Right cardiac atrium (tissue), 5 donors: ENCODE measurements at regions of chr4 and their contacts with region 1.

Region 1: DNA sequence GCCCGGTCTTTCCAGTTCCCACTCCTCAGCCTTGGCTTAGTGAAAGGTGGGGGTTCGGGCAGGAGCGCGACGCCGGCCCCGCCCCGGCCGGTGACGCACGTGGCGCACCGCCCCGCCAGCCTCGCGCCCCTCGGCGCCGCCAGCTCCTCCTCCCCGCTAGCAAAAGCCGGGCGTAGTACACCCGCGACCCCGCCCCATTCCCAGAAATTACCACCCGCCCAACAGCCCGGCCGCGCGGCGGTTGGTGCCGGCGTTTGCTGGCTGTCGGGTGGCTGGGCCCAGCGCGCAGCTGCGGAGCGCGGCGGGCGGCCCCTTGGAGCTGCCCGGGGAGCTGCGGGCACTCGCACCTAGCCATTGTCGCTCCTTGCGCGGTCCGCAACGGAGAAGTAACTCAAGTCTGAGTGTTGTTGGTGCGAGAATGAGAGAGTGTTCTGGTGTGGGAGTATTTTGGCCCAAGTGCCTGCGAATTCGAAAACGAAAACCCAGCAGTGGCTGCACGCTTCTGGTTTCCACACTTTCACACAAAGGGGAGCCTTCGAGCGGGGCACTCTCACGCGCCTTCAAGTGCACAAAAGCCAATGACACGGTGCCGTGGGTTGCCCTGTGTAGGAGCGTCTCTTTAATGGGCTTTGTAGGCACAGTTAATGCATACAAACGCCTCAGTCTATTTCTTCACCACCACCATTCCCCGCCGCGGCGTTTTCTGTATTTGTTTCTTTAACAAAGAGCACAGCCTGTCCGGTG is 1.0 kb upstream of the ELF2 start:
- DNase-seq: peak; percentile 97 to 98 (median 98)
- ATAC-seq: peak; percentile 89 to 93
- H3K4me3 ChIP-seq: peak overlapping the region; percentile 96
- H3K27ac ChIP-seq: peak overlapping the region; percentile 99
- H3K4me1 ChIP-seq: no peaks in the 10 kb centered on the region
- H3K27me3 ChIP-seq: no peaks in the 10 kb centered on the region

Region 2: GRCh38 chr4:138235419-138235952 is 942.6 kb before region 1 on chr4:
- intact Hi-C with region 1: no loop called
- DNase-seq: no peak
- ATAC-seq: no peak
- H3K4me3 ChIP-seq: no peak overlapping the region
- H3K27ac ChIP-seq: no peak overlapping the region
- H3K4me1 ChIP-seq: no peaks in the 10 kb centered on the region
- H3K27me3 ChIP-seq: no peaks in the 10 kb centered on the region

Region 3: GRCh38 chr4:138892483-138893407 is 285.3 kb before region 1 on chr4:
- intact Hi-C with region 1: no loop called
- DNase-seq: no peak
- ATAC-seq: no peak
- H3K4me3 ChIP-seq: no peak overlapping the region
- H3K27ac ChIP-seq: no peak overlapping the region
- H3K4me1 ChIP-seq: no peaks in the 10 kb centered on the region
- H3K27me3 ChIP-seq: no peaks in the 10 kb centered on the region

Region 4: DNA sequence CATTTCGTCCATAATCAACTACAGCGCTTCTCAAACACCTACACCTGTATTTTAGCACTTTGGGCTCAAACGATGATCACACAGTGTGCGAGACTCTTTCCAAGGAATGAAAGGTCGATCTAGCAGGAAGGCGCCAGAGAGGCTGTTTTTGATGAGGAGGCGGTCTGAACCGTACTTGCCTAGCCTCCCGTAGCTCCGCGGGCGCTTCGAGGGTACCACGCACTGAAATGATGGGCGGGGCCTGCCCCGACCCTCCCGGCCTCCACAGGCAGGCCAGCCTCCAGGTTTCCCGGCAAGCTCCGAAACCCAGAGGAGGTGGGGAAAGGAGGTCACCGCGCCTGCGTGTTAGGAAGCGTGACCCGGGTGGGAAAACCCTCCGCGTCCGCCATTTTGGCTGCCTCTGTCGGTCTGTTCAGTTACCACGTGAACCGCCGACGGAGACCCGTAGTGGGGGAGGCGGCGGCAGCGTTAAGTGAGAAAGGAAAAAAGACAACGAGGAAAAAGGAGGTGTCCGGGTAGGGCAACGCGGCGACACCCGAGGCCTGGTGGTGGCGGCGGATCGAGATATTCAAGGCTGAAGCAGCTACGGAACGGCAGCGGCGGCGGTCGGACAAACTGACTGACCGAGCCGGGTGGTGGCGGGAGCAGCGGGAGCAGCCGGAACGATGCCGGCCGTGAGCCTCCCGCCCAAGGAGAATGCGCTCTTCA is 123.2 kb after region 1 on chr4 and contains the start of gene NAA15:
- intact Hi-C with region 1: loop called in 1 of 4 experiments (anchors 10 kb)
- DNase-seq: peak; percentile 99
- ATAC-seq: peak; percentile 97 to 99
- H3K4me3 ChIP-seq: peak within 1 kb of the TSS; percentile 85
- H3K27ac ChIP-seq: peak within 1 kb of the TSS; percentile 92
- H3K4me1 ChIP-seq: no peaks in the 10 kb centered on the region
- H3K27me3 ChIP-seq: no peaks in the 10 kb centered on the region
- total RNA-seq, gene NAA15: 30.0 to 45.0 (median 37.8) TPM